Cardiac septum (tissue), 1 donor: ENCODE measurements at regions of chr6 and their contacts with region 1.

Region 1: DNA sequence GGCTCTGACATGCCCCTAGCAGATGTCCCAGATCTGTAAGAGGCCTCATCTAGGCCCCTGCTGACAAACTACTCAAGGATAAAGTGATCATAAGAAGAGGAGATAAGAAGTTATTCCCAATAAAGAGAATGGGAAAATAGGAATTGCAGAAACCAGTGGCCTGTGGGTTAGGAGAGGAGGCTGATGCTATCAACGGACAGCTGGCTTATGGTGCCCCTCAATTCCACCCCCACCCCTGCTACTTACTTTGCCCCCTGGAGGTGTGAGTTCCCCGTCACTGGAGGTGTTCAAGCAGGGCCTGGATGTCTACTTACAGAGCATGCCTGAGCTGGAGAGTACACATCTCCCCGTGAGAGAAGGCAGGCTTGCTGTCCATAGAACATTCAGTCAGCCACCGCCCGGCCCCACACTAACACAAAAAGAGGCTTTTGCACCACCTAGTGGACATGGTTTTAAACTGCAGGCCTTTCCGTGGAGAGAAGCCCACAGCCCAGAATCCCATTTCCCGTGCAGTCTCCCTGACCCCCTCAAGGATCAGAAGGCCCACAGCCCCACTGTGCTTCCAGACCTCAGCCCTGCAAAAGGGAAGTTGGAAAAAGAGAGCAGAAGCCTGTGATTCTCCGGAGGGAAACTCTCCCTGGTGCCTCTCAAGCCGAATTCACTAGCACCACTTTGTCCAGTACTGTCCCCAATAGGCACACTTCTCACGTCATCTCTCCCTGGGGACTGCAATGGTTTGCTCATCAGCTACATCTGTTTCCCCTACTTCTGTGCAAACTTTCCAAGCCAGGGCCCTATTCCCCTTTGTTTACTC is 23.8 kb upstream of the BNIP5 start:
- DNase-seq: peak; percentile 90

Region 2: DNA sequence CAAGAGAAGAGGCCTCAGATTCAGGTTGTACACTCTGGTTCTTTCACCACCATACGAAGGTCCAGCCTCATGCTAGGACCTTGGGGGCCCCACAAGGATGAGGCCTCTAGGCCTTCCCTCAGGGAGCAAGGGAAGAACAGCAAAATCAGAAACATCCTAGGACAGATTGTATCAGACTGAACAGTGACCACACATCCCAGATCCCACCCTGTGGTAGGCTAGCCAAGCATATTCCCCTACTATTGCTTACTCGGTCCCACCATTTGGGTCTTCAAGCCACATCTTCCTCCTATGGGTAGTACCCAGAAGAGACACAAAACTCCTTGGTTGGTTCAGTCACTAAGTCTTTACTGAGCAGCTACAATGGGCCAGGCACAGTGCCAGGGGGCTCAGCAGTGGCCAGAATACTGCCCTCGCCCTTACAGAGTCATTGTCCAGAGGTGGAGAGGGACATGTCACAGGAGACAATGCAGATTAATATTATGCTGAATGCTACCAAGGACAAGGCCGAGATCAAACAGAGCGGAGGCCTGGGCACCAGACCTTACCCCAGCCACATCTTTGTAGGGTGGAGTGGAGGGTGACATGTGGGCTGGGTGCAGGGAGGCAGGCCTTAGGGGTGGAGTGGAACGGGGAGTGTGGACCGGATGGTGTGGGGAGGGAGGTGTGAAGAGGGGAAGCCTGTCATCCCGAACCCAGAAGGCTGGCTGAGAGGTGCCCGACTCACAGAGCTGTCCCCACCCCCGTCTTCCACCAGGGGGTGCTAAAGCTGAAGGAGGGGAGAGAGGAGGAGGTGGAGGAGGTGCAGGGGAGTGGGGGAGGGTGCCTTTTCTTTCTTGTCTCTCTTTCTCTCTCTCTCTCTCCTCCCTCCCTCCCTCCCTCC is 236.9 kb before region 1 on chr6:
- intact Hi-C with region 1: loop called (anchors 5 kb)
- DNase-seq: peak; percentile 92

Region 3: GRCh38 chr6:36302227-36302976 is 58.0 kb before region 1 on chr6:
- intact Hi-C with region 1: loop called (anchors 1 kb)
- DNase-seq: peak; percentile 90